H1 (cell line): ENCODE measurements at regions of chr7 and their contacts with region 1.

Region 1: DNA sequence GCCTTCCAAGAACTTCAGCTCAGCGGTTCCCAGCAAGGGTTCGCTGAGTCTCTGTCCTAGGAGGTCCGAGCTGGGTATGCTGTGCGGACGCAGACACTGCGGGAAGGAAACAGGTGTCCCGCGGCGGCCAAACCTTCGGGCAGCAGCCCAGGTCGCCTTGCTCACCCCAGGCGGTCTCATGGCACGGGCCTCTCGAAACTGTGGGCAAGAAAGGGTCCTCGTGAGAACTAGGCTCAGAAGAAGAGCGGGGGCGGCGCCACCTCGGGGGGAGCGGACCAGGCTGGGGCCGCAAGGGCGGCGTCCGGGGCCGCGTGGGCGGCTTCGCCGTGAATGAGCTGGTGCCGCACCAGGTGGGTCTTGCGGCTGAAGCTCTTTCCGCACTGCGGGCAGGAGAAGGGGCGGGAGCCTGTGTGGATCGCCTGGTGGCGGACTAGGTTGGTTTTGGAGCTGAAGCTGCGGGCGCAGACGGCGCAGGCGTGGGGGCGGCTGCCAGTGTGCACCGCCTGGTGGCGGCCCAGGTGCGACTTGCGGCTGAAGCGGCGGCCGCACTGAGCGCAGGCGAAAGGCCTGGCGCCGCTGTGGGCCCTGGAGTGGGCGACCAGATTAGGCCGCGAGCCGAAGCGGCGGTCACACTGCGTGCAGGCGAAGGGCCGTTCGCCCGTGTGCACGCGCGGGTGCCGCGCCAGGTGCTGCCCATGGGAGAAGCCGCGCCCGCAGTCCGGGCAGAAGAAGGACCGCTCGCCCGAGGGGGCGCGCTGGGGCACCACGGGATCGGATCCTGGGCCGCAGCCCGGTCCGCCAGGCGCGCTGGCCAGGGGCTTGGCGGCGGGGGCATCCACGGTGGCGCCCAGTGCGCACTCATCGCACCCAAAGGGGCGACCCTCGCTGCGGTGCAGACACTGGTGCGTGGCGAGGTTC is 8.6 kb downstream of the ZNF467 start:
- DNase-seq: peak in 1 of 2 experiments; percentile 73
- H3K4me3 ChIP-seq: peak overlapping the region; percentile 18 to 56 (median 38)
- H3K27ac ChIP-seq: no peak overlapping the region
- H3K4me1 ChIP-seq: peaks cover 0 to 14% (median 12%) of the 10 kb centered on the region in 4 experiments; a peak in 6 of 7 replicates
- H3K27me3 ChIP-seq: peaks cover 68 to 95% (median 87%) of the 10 kb centered on the region in 4 experiments
- CTCF ChIP-seq: peak in 2 of 3 experiments; percentile 33 to 51; a peak in 3 of 4 replicates
- EP300 ChIP-seq: no peak
- POLR2A ChIP-seq: no peak
- RAD21 ChIP-seq: peak; percentile 23 to 24; a peak in 2 of 4 replicates

Region 2: DNA sequence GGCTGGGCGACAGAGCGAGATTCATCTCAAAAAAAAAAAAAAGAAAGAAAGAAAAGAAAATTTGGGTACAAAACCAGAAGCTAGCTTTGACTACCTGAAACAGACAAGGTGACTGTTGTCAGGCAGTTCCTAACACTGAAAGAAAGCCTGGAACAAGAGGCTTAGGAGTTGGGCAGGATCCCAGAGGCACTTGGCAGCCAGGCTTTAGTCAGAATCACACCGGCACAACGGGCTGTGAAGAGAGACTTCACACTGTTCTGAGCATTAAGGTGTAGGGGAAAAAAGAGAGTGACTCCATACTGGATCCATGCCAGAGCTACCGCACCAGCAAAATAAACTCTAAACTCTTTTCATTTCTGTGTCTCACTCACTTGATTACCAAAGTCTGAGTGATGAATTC is 122.2 kb before region 1 on chr7:
- CTCF ChIA-PET with region 1: no interaction called
- POLR2A ChIA-PET with region 1: no interaction called
- DNase-seq: no peak
- H3K4me3 ChIP-seq: no peak overlapping the region
- H3K27ac ChIP-seq: no peak overlapping the region
- H3K4me1 ChIP-seq: no peaks in the 10 kb centered on the region
- H3K27me3 ChIP-seq: no peaks in the 10 kb centered on the region; a peak in 1 of 7 replicates
- CTCF ChIP-seq: no peak
- EP300 ChIP-seq: no peak
- POLR2A ChIP-seq: no peak
- RAD21 ChIP-seq: no peak

Region 3: DNA sequence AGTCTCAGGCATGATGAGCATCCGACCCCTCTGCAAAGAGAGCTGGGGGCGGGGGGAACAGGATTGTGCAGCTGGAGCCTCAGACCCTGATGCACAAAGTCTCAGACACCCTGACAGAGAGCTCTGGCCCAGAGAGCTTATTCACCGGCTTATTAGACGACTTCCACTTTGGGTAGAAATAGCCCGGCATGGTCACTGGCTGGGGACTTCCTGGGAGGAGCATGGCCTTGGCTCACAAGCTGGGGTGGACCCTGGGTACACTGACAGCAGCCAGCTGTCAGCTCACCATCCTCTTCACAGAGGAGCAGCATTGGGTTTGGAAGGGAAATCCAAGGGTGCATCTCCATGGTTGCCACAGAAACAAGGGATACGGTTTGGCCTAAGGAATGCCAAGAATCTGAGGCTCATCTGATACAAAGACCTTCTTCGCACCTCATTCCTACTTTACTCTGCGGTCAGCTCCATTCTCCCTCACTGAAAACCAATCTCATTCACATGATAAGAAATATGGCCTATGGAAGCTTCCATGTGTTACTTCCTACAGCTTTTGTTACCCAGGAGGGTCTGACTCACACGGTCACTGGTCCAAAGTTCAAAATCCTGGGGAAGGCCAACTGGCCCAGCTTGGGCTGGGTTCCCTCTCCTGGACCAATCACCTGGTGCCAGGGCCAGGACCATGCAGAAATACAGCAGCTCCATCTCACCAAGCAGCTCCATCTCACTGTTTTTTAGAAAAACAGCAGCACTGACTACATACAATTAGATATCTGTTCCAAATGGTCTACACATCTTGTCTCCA is 16.5 kb before region 1 on chr7:
- CTCF ChIA-PET with region 1: interaction called, 35 read pairs
- POLR2A ChIA-PET with region 1: no interaction called
- DNase-seq: peak in 1 of 2 experiments; percentile 43
- H3K4me3 ChIP-seq: 0 out of 8 replicates have a peak overlapping the region, but pooled peaks of 1 of the 4 experiments have one; percentile 3
- H3K27ac ChIP-seq: no peak overlapping the region
- H3K4me1 ChIP-seq: peaks cover 0 to 7% (median 0%) of the 10 kb centered on the region in 4 experiments; a peak in 1 of 7 replicates
- H3K27me3 ChIP-seq: no peaks in the 10 kb centered on the region
- CTCF ChIP-seq: no peak
- EP300 ChIP-seq: no peak
- POLR2A ChIP-seq: no peak
- RAD21 ChIP-seq: no peak

Region 4: DNA sequence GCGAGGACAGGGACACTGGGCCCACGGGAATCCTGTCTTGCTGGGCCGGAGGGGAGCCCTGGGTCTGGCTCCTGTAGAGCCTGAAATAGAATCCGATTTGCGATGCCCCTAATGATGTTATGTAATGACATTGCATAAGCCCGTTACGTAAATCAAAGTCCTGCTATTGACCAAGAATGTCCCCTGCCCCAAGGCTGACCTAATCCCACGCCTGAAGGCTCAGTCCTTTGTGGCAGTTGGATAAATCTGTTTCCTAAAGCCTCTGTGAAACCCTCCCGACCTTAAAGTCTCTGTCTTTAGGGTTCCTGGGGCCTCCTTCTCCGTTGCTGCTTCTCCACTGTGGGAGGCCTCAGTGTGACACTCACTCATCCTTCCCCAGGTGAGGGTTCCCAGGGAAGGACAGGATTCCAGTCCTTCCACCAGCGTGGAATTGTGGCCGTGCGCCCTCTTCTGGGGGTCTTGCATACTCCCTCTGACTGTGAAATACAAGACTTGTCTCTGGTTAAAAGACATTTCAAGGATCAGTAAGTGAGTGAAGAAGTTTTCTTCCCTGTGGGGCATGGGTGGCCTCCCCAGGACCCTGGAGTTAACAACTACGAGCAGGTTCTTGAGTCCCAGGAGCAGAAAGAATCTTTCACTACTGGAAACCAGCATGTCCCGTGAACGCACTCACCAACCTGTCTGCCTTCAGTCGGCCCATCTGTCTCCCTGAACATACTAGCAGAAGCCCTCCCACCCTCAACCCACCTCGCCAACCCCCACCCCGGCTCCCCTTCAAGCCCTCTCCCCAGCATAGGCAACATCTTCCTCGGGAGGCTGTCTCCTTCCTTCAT is 11.1 kb before region 1 on chr7:
- CTCF ChIA-PET with region 1: interaction called, 35 read pairs
- POLR2A ChIA-PET with region 1: no interaction called
- DNase-seq: peak in 1 of 2 experiments; percentile 83
- H3K4me3 ChIP-seq: no peak overlapping the region
- H3K27ac ChIP-seq: no peak overlapping the region
- H3K4me1 ChIP-seq: no peaks in the 10 kb centered on the region
- H3K27me3 ChIP-seq: no peaks in the 10 kb centered on the region; a peak in 1 of 7 replicates
- CTCF ChIP-seq: peak; percentile 66 to 81 (median 75)
- EP300 ChIP-seq: no peak
- POLR2A ChIP-seq: no peak
- RAD21 ChIP-seq: peak; percentile 62 to 73